PC-3 (cell line): ENCODE measurements at regions of chrX and their contacts with region 1.

Region 1: GRCh38 chrX:119791438-119792231 is at the start of gene RPL39:
- DNase-seq: peak; percentile 87
- ATAC-seq: peak; percentile 95
- H3K4me3 ChIP-seq: peak within 1 kb of the TSS; percentile 99
- H3K27ac ChIP-seq: peak within 1 kb of the TSS; percentile 85
- H3K4me1 ChIP-seq: peaks cover 23% of the 10 kb centered on the region; the same call in 1 of the 2 replicates
- H3K27me3 ChIP-seq: no peaks in the 10 kb centered on the region
- CTCF ChIP-seq: no peak
- total RNA-seq, gene RPL39: 869 and 1,578 TPM in 2 replicates

Region 2: GRCh38 chrX:119852382-119853353 is 61.0 kb after region 1 on chrX and contains the start of gene UPF3B:
- CTCF ChIA-PET with region 1: interaction called, 5 read pairs
- POLR2A ChIA-PET with region 1: interaction called, 3 read pairs
- intact Hi-C with region 1: loop called (anchors 2 kb)
- DNase-seq: peak; percentile 98
- ATAC-seq: peak; percentile 94
- H3K4me3 ChIP-seq: peak within 1 kb of the TSS; percentile 100
- H3K27ac ChIP-seq: peak within 1 kb of the TSS; percentile 55
- H3K4me1 ChIP-seq: peaks cover 6% of the 10 kb centered on the region; the same call in 1 of the 2 replicates
- H3K27me3 ChIP-seq: no peaks in the 10 kb centered on the region
- CTCF ChIP-seq: no peak
- total RNA-seq, gene UPF3B: 4.7 and 8.1 TPM in 2 replicates